CD8-positive, alpha-beta T cell (primary cell): ENCODE measurements at regions of chr14 and their contacts with region 1.

Region 1: DNA sequence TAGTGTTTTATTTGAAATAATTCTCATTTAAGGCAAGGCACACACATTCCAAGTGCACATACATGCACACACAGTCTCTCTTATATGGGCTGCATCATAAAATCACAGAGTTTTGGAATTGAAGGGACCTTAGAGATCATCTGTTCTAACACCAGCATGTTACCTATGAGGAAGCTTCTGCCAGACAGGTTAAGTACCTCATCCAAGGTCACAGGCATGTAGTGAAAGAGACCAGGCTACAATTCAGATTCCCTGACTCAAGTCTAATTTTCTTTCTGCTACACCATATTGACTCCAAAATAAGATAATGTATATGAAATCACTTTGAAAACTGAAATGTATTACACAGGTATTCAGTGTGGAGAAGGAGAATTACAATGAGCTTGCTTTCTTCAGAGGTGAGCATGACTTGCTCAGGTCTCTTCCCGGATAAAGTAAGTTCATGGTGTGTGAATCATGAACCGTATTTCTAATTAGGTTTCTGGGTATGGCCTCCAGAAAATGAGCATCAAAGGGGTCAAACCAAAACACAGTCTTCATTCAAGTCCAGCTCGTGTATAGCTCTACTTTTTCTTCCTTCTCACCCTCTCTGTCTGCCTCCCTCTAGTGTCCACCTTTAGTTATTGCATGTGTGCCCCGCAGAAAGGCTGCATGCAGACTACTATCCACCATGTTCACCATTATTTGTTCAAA is 411.9 kb downstream of the FUT8 start:
- DNase-seq: peak; percentile 27 to 80 (median 59)
- ATAC-seq: peak; percentile 98
- H3K4me3 ChIP-seq: no peak overlapping the region
- H3K4me3 Mint-ChIP-seq: no peak overlapping the region
- H3K27ac ChIP-seq: no peak overlapping the region
- H3K27ac Mint-ChIP-seq: no peak overlapping the region
- H3K4me1 ChIP-seq: peaks cover 4% of the 10 kb centered on the region
- H3K4me1 Mint-ChIP-seq: peaks cover 15% of the 10 kb centered on the region
- H3K27me3 ChIP-seq: no peaks in the 10 kb centered on the region
- H3K27me3 Mint-ChIP-seq: no peaks in the 10 kb centered on the region
- CTCF ChIP-seq: peak; percentile 96

Region 2: DNA sequence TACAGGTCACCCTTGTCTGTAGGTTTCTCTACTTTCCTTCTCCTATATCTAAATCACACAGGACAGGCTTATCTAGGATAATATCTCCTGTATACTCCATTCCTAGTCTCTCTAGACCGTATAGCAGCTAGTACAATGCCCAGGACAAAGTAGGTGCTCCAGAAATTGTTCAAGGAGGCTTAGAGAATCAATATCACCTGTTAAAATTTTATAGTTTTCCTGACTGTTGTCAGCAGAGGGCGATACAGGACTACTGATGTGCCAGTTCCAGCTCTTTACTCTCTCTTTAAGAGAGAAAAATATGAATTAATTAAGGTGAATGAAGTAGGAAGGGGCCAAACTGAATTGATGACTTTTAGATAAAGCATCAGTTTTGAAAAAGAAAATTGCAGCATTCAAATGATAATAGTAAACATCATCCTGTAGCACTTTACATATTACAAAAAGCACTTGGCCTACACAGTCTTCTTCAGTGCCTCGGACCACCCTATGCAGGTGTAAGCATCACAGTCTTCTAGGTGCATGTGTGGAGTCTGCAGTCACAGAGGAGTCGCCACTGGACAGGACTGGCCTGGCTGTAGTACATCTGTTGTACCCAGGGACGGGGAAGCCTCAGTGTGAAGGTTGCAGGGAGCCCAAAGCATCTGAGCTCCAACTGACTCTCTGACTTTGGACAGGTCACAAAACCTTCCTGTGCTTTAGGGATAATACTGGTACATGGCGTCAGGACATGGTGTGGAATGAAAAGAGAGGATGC is 660.2 kb before region 1 on chr14:
- CTCF ChIA-PET with region 1: interaction called, 44 read pairs
- POLR2A ChIA-PET with region 1: interaction called, 3 read pairs
- intact Hi-C with region 1: loop called (anchors 1 kb)
- DNase-seq: peak in 6 of 9 experiments; percentile 5 to 69 (median 37)
- ATAC-seq: peak; percentile 48
- H3K4me3 ChIP-seq: no peak overlapping the region
- H3K4me3 Mint-ChIP-seq: no peak overlapping the region
- H3K27ac ChIP-seq: no peak overlapping the region
- H3K27ac Mint-ChIP-seq: no peak overlapping the region
- H3K4me1 ChIP-seq: no peaks in the 10 kb centered on the region
- H3K4me1 Mint-ChIP-seq: no peaks in the 10 kb centered on the region
- H3K27me3 ChIP-seq: no peaks in the 10 kb centered on the region
- H3K27me3 Mint-ChIP-seq: no peaks in the 10 kb centered on the region
- CTCF ChIP-seq: peak; percentile 76

Region 3: GRCh38 chr14:65281991-65282895 is 542.2 kb before region 1 on chr14:
- CTCF ChIA-PET with region 1: interaction called, 3 read pairs
- POLR2A ChIA-PET with region 1: no interaction called
- intact Hi-C with region 1: loop called in 1 of 2 experiments (anchors 10 kb)
- DNase-seq: peak in 3 of 9 experiments; percentile 32 to 58 (median 42)
- ATAC-seq: peak; percentile 51
- H3K4me3 ChIP-seq: peak overlapping the region; percentile 25 to 32
- H3K4me3 Mint-ChIP-seq: peak overlapping the region; percentile 83
- H3K27ac ChIP-seq: peak overlapping the region; percentile 19 to 55
- H3K27ac Mint-ChIP-seq: peak overlapping the region; percentile 95
- H3K4me1 ChIP-seq: peaks cover 32% of the 10 kb centered on the region
- H3K4me1 Mint-ChIP-seq: peaks cover 42% of the 10 kb centered on the region
- H3K27me3 ChIP-seq: no peaks in the 10 kb centered on the region
- H3K27me3 Mint-ChIP-seq: no peaks in the 10 kb centered on the region
- CTCF ChIP-seq: no peak

Region 4: GRCh38 chr14:65750906-65751305 is 73.5 kb before region 1 on chr14:
- CTCF ChIA-PET with region 1: no interaction called
- POLR2A ChIA-PET with region 1: no interaction called
- intact Hi-C with region 1: no loop called
- DNase-seq: no peak
- ATAC-seq: no peak
- H3K4me3 ChIP-seq: no peak overlapping the region
- H3K4me3 Mint-ChIP-seq: no peak overlapping the region
- H3K27ac ChIP-seq: no peak overlapping the region
- H3K27ac Mint-ChIP-seq: peak overlapping the region; percentile 46
- H3K4me1 ChIP-seq: peaks cover 5% of the 10 kb centered on the region
- H3K4me1 Mint-ChIP-seq: peaks cover 16% of the 10 kb centered on the region
- H3K27me3 ChIP-seq: no peaks in the 10 kb centered on the region
- H3K27me3 Mint-ChIP-seq: no peaks in the 10 kb centered on the region
- CTCF ChIP-seq: no peak

Region 5: DNA sequence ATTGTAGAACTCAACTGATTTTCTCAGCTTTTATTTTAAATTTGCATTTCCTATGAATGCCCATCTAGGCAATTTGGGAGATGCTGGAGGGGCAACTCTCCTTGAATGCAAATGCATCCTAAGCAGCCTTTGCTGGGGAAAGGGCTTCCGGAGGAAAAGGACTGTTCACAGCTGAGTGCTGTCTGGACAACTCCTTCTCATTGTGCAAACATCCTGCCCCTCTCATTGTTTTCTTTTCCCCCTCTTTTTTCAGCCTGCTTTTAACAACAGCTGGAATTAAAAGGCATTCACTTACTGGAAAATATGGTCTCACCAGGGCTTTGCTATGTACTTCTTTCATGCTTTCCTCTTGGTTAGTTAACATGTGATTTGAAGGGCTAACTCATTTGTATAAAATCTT is 14.1 kb before region 1 on chr14:
- CTCF ChIA-PET with region 1: interaction called, 85 read pairs
- POLR2A ChIA-PET with region 1: no interaction called
- intact Hi-C with region 1: no loop called
- DNase-seq: no peak
- ATAC-seq: no peak
- H3K4me3 ChIP-seq: no peak overlapping the region
- H3K4me3 Mint-ChIP-seq: no peak overlapping the region
- H3K27ac ChIP-seq: no peak overlapping the region
- H3K27ac Mint-ChIP-seq: no peak overlapping the region
- H3K4me1 ChIP-seq: peaks cover 3% of the 10 kb centered on the region
- H3K4me1 Mint-ChIP-seq: peaks cover 3% of the 10 kb centered on the region
- H3K27me3 ChIP-seq: no peaks in the 10 kb centered on the region
- H3K27me3 Mint-ChIP-seq: no peaks in the 10 kb centered on the region
- CTCF ChIP-seq: no peak

Region 6: GRCh38 chr14:65860956-65861611 is 36.7 kb after region 1 on chr14:
- CTCF ChIA-PET with region 1: interaction called, 9 read pairs
- POLR2A ChIA-PET with region 1: no interaction called
- intact Hi-C with region 1: loop called (anchors 1 to 5 kb)
- DNase-seq: peak in 6 of 9 experiments; percentile 22 to 66 (median 32)
- ATAC-seq: peak; percentile 54
- H3K4me3 ChIP-seq: no peak overlapping the region
- H3K4me3 Mint-ChIP-seq: peak overlapping the region; percentile 27
- H3K27ac ChIP-seq: peak overlapping the region in 1 of 2 experiments; percentile 2
- H3K27ac Mint-ChIP-seq: peak overlapping the region; percentile 66
- H3K4me1 ChIP-seq: peaks cover 58% of the 10 kb centered on the region
- H3K4me1 Mint-ChIP-seq: peaks cover 67% of the 10 kb centered on the region
- H3K27me3 ChIP-seq: no peaks in the 10 kb centered on the region
- H3K27me3 Mint-ChIP-seq: no peaks in the 10 kb centered on the region
- CTCF ChIP-seq: no peak

Region 7: DNA sequence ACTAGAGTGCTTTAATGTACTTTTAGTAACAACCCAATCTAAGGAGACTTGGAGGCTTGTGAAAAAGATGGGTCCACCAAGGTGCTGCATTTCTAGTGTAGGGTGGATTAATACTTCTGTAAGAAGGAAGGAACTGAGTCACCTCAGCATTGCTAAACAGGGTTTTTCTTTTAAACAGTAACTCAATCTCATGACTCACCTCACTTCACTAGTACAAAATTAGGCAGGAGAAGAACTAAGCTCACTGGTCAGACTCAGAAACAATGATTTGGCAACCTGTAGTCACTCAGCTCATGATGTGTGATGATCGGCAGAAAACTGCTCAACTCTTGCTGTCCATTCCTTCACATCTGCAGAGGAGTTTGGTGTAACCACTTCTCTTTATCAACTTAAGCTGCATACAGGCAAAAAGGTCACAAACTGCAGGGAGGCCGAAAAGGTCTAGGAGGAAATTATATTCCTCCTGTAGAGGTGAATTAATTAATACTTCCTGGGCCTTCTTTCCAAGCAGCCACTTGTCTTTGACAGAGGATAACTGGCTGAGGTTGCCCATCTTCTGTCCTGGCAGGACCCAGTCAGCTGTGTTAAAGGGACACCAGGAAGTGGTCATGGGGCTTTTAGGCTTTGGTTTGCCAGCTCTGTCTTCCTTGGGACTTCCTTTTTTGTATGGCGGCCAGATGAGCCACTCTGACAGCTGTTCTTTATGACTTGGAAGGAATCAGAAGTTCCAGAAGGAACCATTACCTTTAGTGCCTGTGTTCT is 55.0 kb after region 1 on chr14:
- CTCF ChIA-PET with region 1: interaction called, 21 read pairs
- POLR2A ChIA-PET with region 1: no interaction called
- intact Hi-C with region 1: no loop called
- DNase-seq: no peak
- ATAC-seq: no peak
- H3K4me3 ChIP-seq: no peak overlapping the region
- H3K4me3 Mint-ChIP-seq: no peak overlapping the region
- H3K27ac ChIP-seq: no peak overlapping the region
- H3K27ac Mint-ChIP-seq: peak overlapping the region; percentile 64
- H3K4me1 ChIP-seq: peaks cover 37% of the 10 kb centered on the region
- H3K4me1 Mint-ChIP-seq: peaks cover 29% of the 10 kb centered on the region
- H3K27me3 ChIP-seq: no peaks in the 10 kb centered on the region
- H3K27me3 Mint-ChIP-seq: no peaks in the 10 kb centered on the region
- CTCF ChIP-seq: no peak

Region 8: DNA sequence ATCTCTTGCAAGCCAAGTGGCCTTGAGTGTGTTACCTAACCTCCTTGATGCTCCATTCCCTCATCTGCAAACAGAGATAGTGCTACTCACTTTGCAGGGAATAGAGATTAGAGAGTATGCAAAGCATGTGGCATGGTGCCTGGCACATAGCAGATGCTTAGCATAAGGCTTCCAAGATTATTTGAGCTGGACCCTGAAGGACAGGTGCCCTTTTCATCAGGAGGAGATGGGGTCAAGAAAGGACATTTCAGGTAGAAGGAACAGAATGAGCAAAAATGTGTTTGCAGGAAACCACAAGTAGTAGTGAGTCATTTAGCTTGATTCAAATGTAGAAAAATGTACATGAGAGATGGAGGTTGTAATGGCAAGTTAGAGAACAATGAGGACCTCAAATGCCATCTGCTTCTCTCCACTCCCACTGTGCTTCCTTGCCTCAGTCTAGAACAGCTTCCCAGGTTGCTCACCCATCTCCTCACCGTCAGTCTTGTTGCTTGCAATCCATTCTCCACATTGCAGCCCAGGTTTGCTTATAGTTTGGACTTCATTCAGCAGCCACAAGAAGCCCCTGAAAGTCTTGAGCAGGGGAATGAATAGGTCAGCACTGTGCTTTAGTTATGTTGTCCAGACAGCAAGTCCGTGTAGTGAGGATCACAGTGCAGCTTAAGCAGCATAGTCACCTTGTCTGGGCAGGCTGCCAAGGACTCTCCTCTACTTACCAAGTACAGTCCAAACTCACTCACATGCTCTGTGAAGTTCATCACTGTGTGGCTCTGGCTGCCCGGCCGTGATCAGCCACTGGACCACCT is 125.5 kb after region 1 on chr14:
- CTCF ChIA-PET with region 1: interaction called, 118 read pairs
- POLR2A ChIA-PET with region 1: no interaction called
- intact Hi-C with region 1: loop called in 1 of 2 experiments (anchors 5 kb)
- DNase-seq: peak in 5 of 9 experiments; percentile 31 to 56 (median 34)
- ATAC-seq: no peak
- H3K4me3 ChIP-seq: no peak overlapping the region
- H3K4me3 Mint-ChIP-seq: no peak overlapping the region
- H3K27ac ChIP-seq: no peak overlapping the region
- H3K27ac Mint-ChIP-seq: no peak overlapping the region
- H3K4me1 ChIP-seq: peaks cover 14% of the 10 kb centered on the region
- H3K4me1 Mint-ChIP-seq: peaks cover 38% of the 10 kb centered on the region
- H3K27me3 ChIP-seq: no peaks in the 10 kb centered on the region
- H3K27me3 Mint-ChIP-seq: no peaks in the 10 kb centered on the region
- CTCF ChIP-seq: no peak